Dorsolateral prefrontal cortex (tissue), 120 donors: ENCODE measurements at regions of chr6 and their contacts with region 1.

Region 1: DNA sequence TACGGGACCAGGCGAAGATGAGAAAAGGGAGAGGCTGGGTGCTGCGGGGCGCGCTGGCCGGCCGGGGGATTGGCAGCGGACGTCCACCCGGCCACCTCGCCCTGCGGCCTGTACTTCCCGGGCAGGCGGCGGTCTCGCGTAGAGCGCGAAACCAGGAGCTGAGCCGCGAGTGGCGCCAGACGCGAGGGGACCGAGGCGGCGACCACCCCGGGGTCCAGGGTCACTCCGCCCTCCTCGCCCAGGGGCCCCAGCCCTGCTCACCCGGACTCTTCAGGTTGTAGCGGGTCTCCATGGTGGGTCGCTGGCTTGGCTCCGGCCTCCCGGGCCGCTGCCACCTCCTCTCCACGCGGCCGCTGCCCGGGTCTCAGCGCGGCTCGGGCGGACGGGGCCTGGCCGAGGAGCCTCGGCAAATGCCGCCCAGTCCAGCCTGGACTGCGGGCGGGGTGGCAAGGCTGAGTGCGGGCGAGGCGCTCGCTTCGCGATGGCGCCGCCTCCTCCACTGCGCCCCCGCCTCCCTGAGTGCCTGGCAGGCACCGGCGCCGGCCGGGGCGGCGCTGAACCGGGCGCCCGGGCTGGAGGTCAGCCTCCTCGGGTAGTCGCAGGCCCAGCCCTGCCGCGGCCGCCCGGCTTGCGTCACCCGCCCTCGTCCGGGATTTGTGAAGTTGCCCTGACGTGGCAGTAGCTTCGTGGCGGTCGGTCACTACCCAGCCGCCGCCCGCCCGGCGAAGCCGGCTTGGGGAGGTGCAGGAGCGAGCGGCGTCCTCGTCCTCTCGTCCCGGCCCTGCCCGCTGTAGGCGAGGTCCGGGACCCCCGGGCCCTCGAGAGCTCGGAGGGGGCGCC is at the start of gene UBE2J1:
- DNase-seq: peak; percentile 74 to 92 (median 86)
- H3K4me3 ChIP-seq: peak within 1 kb of the TSS; percentile 75 to 99 (median 92)
- H3K27ac ChIP-seq: peak within 1 kb of the TSS; percentile 85 to 99 (median 96)
- H3K27me3 ChIP-seq: no peaks in the 10 kb centered on the region
- CTCF ChIP-seq: peak in 22 of 56 donors; percentile 1 to 63 (median 29)
- total RNA-seq, gene UBE2J1: 16.6 to 28.5 (median 23.0) TPM

Region 2: DNA sequence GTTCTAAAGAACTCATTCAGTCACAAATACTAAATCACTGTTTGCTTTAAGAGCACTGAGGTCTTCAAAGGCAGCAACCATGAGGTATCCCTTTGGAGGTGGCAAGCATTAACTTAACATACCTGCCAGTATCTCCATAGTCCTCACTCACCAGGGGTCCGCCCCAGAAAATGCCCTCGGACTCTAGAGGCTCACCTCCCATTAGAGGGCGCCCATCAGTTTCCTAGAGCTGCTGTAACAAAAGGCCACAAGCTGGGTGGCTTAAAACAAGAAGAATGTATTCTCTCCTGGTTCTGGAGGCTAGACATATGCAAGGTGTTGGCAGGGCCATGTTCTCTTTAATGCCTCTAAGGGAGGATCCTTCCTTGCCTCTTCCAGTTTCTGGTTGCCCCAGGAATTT is 377.1 kb before region 1 on chr6:
- intact Hi-C with region 1: loop called in 1 of 2 experiments (anchors 10 kb)
- DNase-seq: no peak
- H3K4me3 ChIP-seq: no peak overlapping the region
- H3K27ac ChIP-seq: no peak overlapping the region
- H3K27me3 ChIP-seq: no peaks in the 10 kb centered on the region
- CTCF ChIP-seq: no peak

Region 3: DNA sequence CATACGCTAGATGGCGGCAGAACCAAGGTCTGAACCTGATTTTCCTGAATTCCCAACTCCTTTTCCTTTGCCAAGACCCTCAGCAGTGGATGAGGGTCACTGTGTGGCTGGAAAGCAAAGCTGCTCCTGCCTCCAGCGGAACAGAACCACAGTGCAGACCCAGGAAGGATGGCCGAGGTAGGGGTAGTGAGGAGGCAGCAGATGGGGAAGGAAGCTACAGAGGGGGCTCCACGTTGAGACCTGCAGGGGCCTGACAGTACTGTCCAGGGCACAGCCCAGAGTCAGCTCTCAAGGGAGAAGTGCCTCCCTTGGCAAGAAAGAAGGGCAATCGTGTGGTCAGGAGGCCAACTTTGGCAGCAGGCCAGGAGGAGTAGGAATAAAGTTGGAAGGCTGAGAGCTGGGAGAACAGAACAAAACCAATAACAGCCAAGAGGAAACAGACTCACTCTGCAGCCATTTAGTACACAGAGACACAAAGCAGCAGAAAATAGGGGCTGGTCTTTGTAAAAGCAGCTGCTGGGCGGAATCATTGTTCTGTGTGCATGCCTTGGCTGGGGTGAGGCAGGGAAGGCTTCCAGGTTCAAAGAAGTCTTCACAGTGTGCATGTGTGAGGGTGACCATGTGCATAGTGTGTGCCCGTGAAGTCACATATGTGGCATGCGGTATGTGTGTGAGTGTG is 40.5 kb before region 1 on chr6:
- intact Hi-C with region 1: loop called in 1 of 2 experiments (anchors 5 kb)
- DNase-seq: peak in 6 of 10 donors; percentile 20 to 66 (median 50)
- H3K4me3 ChIP-seq: peak overlapping the region in 14 of 59 donors; percentile 0 to 35 (median 12)
- H3K27ac ChIP-seq: peak overlapping the region in 39 of 59 donors; percentile 9 to 78 (median 42)
- H3K27me3 ChIP-seq: no peaks in the 10 kb centered on the region
- CTCF ChIP-seq: peak in 48 of 56 donors; percentile 26 to 74 (median 50)